Uterus (tissue), 4 donors: ENCODE measurements at regions of chr2 and their contacts with region 1.

Region 1: GRCh38 chr2:198296665-198297308 is 492.4 kb downstream of the PLCL1 start:
- DNase-seq: peak; percentile 48 to 50
- H3K4me3 ChIP-seq: no peak overlapping the region
- H3K27ac ChIP-seq: no peak overlapping the region
- H3K4me1 ChIP-seq: no peaks in the 10 kb centered on the region
- H3K27me3 ChIP-seq: no peaks in the 10 kb centered on the region
- CTCF ChIP-seq: peak; percentile 67 to 85 (median 76)
- POLR2A ChIP-seq: no peak

Region 2: DNA sequence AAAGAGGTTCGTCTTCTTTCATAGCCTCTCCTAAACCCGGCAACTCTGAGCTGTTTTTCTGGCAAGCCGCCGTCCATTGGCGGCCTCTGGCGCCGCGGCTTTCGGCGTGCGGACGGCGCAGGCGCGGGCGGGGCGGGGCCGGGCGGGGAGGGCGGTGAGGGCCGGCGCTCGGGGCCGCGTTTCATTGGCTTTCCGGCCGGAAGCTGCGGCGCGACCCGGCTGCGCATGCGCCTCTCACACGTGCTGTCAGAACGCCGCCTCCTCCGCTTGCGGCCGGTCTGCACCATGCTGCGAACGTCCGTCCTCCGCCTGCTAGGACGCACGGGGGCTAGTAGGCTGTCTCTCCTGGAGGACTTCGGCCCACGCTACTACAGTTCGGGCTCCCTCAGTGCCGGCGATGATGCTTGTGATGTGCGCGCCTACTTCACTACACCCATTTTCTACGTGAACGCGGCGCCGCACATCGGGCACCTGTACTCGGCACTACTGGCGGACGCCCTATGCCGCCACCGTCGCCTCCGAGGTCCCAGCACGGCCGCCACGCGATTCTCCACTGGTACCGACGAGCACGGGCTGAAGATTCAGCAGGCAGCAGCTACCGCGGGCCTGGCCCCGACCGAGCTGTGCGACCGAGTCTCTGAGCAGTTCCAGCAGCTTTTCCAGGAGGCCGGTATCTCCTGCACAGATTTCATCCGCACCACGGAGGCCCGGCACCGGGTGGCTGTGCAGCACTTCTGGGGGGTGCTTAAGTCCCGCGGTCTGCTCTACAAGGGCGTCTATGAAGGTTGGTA is 591.5 kb before region 1 on chr2 and contains the start of gene MARS2:
- intact Hi-C with region 1: loop called (anchors 10 kb)
- DNase-seq: peak; percentile 91 to 93
- H3K4me3 ChIP-seq: peak within 1 kb of the TSS; percentile 83 to 93
- H3K27ac ChIP-seq: peak within 1 kb of the TSS; percentile 77 to 88
- H3K4me1 ChIP-seq: peaks cover 0 to 6% of the 10 kb centered on the region in 2 donors
- H3K27me3 ChIP-seq: no peaks in the 10 kb centered on the region
- CTCF ChIP-seq: peak in 1 of 4 experiments; percentile 6
- POLR2A ChIP-seq: peak; percentile 35 to 46
- total RNA-seq, gene MARS2: 4.7 to 17.9 (median 8.0) TPM in 3 of 4 donors, not detected in the other

Region 3: GRCh38 chr2:198347946-198348345 is 51.2 kb after region 1 on chr2:
- intact Hi-C with region 1: no loop called
- DNase-seq: no peak
- H3K4me3 ChIP-seq: no peak overlapping the region
- H3K27ac ChIP-seq: no peak overlapping the region
- H3K4me1 ChIP-seq: no peaks in the 10 kb centered on the region
- H3K27me3 ChIP-seq: no peaks in the 10 kb centered on the region
- CTCF ChIP-seq: no peak
- POLR2A ChIP-seq: no peak